Psoas muscle (tissue), 8 donors: ENCODE measurements at regions of chr13 and their contacts with region 1.

Region 1: GRCh38 chr13:102596147-102597028 is at the start of gene TPP2:
- DNase-seq: peak; percentile 100
- ATAC-seq: peak; percentile 97 to 99 (median 98)
- H3K4me3 ChIP-seq: peak within 1 kb of the TSS; percentile 97
- H3K27ac ChIP-seq: peak within 1 kb of the TSS; percentile 99
- H3K4me1 ChIP-seq: peaks cover 43% of the 10 kb centered on the region
- H3K27me3 ChIP-seq: no peaks in the 10 kb centered on the region
- CTCF ChIP-seq: no peak
- total RNA-seq, gene TPP2: 35.2 to 45.6 (median 42.7) TPM

Region 2: GRCh38 chr13:102845630-102846260 is 249.4 kb after region 1 on chr13 and contains the start of gene ERCC5:
- intact Hi-C with region 1: loop called (anchors 2 to 5 kb)
- DNase-seq: peak; percentile 94 to 97
- ATAC-seq: peak; percentile 93 to 95 (median 94)
- H3K4me3 ChIP-seq: peak within 1 kb of the TSS; percentile 82
- H3K27ac ChIP-seq: peak within 1 kb of the TSS; percentile 94
- H3K4me1 ChIP-seq: peaks cover 9% of the 10 kb centered on the region
- H3K27me3 ChIP-seq: no peaks in the 10 kb centered on the region
- CTCF ChIP-seq: no peak
- total RNA-seq, gene ERCC5: 21.0 to 31.0 (median 27.4) TPM